ENCODE measurements at regions of chr17 and their contacts with region 1.

Region 1: DNA sequence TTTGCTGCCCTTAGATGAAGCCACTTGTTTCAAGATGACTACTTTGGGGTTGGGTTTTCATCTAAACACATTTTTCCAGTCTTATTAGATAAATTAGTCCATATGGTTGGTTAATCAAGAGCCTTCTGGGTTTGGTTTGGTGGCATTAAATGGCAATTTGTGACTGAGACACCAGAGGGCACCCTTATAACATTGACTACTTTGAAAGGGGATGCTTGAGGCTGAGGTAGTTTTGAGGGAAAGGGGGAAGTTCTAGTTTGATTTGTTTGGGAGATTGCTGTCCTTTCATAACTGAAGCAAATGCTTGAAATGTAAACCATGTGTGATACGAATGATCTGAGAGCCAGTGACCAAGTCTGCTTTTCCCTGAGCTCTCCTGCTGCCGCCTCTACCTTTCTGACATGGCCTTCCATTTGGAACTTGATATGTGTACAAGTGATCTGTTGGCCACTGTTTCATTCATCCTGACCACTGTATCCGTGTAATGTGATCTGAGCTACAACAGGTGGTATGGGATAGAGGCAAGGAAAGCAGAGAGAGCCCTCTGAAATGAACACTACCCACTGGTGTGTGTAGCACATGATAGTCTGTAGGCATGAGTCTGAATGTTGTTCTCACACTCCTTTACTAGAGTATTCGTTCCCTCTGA is 5.8 kb upstream of the RARA start:
- DNase-seq: no peak
- H3K4me3 ChIP-seq: no peak overlapping the region
- H3K27ac ChIP-seq: no peak overlapping the region
- H3K4me1 ChIP-seq: peaks cover 10 to 19% (median 16%) of the 10 kb centered on the region in 4 experiments
- H3K27me3 ChIP-seq: peaks cover 0 to 1% (median 0%) of the 10 kb centered on the region in 4 experiments; a peak in 1 of 7 replicates
- CTCF ChIP-seq: peak in 2 of 3 experiments; percentile 65 to 66; a peak in 3 of 4 replicates
- EP300 ChIP-seq: no peak
- POLR2A ChIP-seq: peak in 1 of 2 experiments; percentile 57; a peak in 1 of 3 replicates
- RAD21 ChIP-seq: peak; percentile 79 to 86

Region 2: GRCh38 chr17:40317880-40318829 is 15.0 kb after region 1 on chr17:
- CTCF ChIA-PET with region 1: interaction called, 51 read pairs
- POLR2A ChIA-PET with region 1: interaction called, 540 read pairs
- DNase-seq: peak; percentile 81 to 88
- H3K4me3 ChIP-seq: peak overlapping the region; percentile 55 to 81 (median 71)
- H3K27ac ChIP-seq: no peak overlapping the region
- H3K4me1 ChIP-seq: peaks cover 0 to 40% (median 30%) of the 10 kb centered on the region in 4 experiments; a peak in 6 of 7 replicates
- H3K27me3 ChIP-seq: peaks cover 0 to 30% (median 16%) of the 10 kb centered on the region in 4 experiments; a peak in 5 of 7 replicates
- CTCF ChIP-seq: no peak
- EP300 ChIP-seq: no peak
- POLR2A ChIP-seq: peak in 1 of 2 experiments; percentile 41; a peak in 1 of 3 replicates
- RAD21 ChIP-seq: no peak

Region 3: GRCh38 chr17:40331743-40332641 is 28.9 kb after region 1 on chr17:
- CTCF ChIA-PET with region 1: interaction called, 75 read pairs
- POLR2A ChIA-PET with region 1: interaction called, 22 read pairs
- DNase-seq: no peak
- H3K4me3 ChIP-seq: no peak overlapping the region
- H3K27ac ChIP-seq: no peak overlapping the region
- H3K4me1 ChIP-seq: peaks cover 0 to 4% (median 1%) of the 10 kb centered on the region in 4 experiments; a peak in 3 of 7 replicates
- H3K27me3 ChIP-seq: peaks cover 0 to 10% (median 2%) of the 10 kb centered on the region in 4 experiments; a peak in 4 of 7 replicates
- CTCF ChIP-seq: no peak
- EP300 ChIP-seq: no peak
- POLR2A ChIP-seq: no peak
- RAD21 ChIP-seq: no peak

Region 4: GRCh38 chr17:40482722-40483121 is 179.6 kb after region 1 on chr17:
- CTCF ChIA-PET with region 1: no interaction called
- POLR2A ChIA-PET with region 1: no interaction called
- DNase-seq: no peak
- H3K4me3 ChIP-seq: no peak overlapping the region
- H3K27ac ChIP-seq: no peak overlapping the region
- H3K4me1 ChIP-seq: peaks cover 0 to 17% (median 7%) of the 10 kb centered on the region in 4 experiments; a peak in 6 of 7 replicates
- H3K27me3 ChIP-seq: no peaks in the 10 kb centered on the region; a peak in 1 of 7 replicates
- CTCF ChIP-seq: no peak
- EP300 ChIP-seq: no peak
- POLR2A ChIP-seq: no peak
- RAD21 ChIP-seq: no peak

Region 5: DNA sequence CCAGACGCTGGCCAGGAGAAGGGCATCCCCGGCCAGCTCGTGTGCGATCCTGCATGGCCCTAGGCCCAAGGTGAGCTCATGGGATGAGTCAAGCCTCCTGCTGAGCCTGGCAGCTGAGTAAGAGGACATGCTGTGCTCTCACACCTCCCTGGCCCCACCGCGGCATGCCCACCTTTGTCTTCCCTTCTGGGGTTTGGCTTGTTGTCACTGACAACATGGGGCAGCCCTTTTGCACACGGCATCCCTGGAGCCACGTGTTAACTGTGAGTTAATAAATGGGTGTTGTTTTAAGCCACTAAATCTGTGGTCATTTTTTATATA is 207.2 kb after region 1 on chr17:
- CTCF ChIA-PET with region 1: no interaction called
- POLR2A ChIA-PET with region 1: no interaction called
- DNase-seq: no peak
- H3K4me3 ChIP-seq: no peak overlapping the region
- H3K27ac ChIP-seq: no peak overlapping the region
- H3K4me1 ChIP-seq: peaks cover 3 to 11% (median 5%) of the 10 kb centered on the region in 4 experiments; a peak in 5 of 7 replicates
- H3K27me3 ChIP-seq: no peaks in the 10 kb centered on the region
- CTCF ChIP-seq: no peak
- EP300 ChIP-seq: no peak
- POLR2A ChIP-seq: no peak
- RAD21 ChIP-seq: no peak